ENCODE measurements at regions of chr13 and their contacts with region 1.

Region 1: GRCh38 chr13:99027260-99027659 is 49.4 kb upstream of the DOCK9 start:
- DNase-seq: peak; percentile 35
- H3K4me3 Mint-ChIP-seq: no peak overlapping the region
- H3K27ac Mint-ChIP-seq: peak overlapping the region; percentile 74
- H3K4me1 Mint-ChIP-seq: peaks cover 88% of the 10 kb centered on the region
- H3K27me3 Mint-ChIP-seq: no peaks in the 10 kb centered on the region

Region 2: GRCh38 chr13:98664039-98664438 is 363.2 kb before region 1 on chr13:
- CTCF ChIA-PET with region 1: no interaction called
- intact Hi-C with region 1: loop called (anchors 2 kb)
- DNase-seq: peak; percentile 85
- H3K4me3 Mint-ChIP-seq: no peak overlapping the region
- H3K27ac Mint-ChIP-seq: peak overlapping the region; percentile 44
- H3K4me1 Mint-ChIP-seq: peaks cover 19% of the 10 kb centered on the region
- H3K27me3 Mint-ChIP-seq: no peaks in the 10 kb centered on the region

Region 3: GRCh38 chr13:99425485-99426341 is 398.5 kb after region 1 on chr13:
- CTCF ChIA-PET with region 1: no interaction called
- intact Hi-C with region 1: no loop called
- DNase-seq: peak; percentile 84
- H3K4me3 Mint-ChIP-seq: peak overlapping the region; percentile 74
- H3K27ac Mint-ChIP-seq: peak overlapping the region; percentile 97
- H3K4me1 Mint-ChIP-seq: peaks cover 63% of the 10 kb centered on the region
- H3K27me3 Mint-ChIP-seq: no peaks in the 10 kb centered on the region